Activated B cell treated with CpG ODN at 0.5 μM for 24 hours (primary cell): ENCODE measurements at regions of chr11 and their contacts with region 1.

Region 1: DNA sequence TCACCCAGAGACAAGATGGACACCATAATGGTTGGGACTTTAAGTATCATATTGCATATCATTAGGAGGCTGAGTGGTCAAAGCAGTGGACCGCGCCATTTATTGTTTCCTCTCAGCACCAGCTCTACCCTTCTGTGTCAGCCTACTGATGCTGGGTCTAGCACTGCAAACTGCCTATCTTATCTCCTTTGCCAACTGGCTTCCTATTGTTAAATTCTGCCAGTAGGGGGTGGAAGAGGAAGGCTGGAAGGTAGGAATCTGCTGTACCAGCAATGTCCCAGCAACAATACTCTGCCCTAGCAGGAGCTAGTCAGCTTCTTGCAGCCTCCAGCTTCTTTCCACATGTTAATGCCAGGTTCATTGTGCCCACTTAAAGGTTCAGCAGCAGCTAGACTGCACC is 367.1 kb upstream of the PDGFD start:
- DNase-seq: no peak
- ATAC-seq: no peak
- H3K4me3 Mint-ChIP-seq: no peak overlapping the region
- H3K27ac Mint-ChIP-seq: no peak overlapping the region
- H3K4me1 Mint-ChIP-seq: no peaks in the 10 kb centered on the region
- H3K27me3 Mint-ChIP-seq: no peaks in the 10 kb centered on the region
- CTCF ChIP-seq: no peak

Region 2: GRCh38 chr11:105862736-105863367 is 1331.8 kb after region 1 on chr11:
- CTCF ChIA-PET with region 1: interaction called, 7 read pairs
- POLR2A ChIA-PET with region 1: no interaction called
- intact Hi-C with region 1: loop called (anchors 2 kb)
- DNase-seq: no peak
- ATAC-seq: no peak
- H3K4me3 Mint-ChIP-seq: no peak overlapping the region
- H3K27ac Mint-ChIP-seq: no peak overlapping the region
- H3K4me1 Mint-ChIP-seq: no peaks in the 10 kb centered on the region
- H3K27me3 Mint-ChIP-seq: peaks cover 1% of the 10 kb centered on the region
- CTCF ChIP-seq: no peak